ENCODE measurements at regions of chr21 and their contacts with region 1.

Region 1: GRCh38 chr21:42009831-42010523 is at the start of gene ZBTB21:
- DNase-seq: peak; percentile 95 to 99 (median 98)

Region 2: GRCh38 chr21:41879190-41879998 is 130.6 kb before region 1 on chr21 and contains the start of gene PRDM15:
- intact Hi-C with region 1: loop called (anchors 2 kb)
- DNase-seq: peak; percentile 77 to 98 (median 84)

Region 3: DNA sequence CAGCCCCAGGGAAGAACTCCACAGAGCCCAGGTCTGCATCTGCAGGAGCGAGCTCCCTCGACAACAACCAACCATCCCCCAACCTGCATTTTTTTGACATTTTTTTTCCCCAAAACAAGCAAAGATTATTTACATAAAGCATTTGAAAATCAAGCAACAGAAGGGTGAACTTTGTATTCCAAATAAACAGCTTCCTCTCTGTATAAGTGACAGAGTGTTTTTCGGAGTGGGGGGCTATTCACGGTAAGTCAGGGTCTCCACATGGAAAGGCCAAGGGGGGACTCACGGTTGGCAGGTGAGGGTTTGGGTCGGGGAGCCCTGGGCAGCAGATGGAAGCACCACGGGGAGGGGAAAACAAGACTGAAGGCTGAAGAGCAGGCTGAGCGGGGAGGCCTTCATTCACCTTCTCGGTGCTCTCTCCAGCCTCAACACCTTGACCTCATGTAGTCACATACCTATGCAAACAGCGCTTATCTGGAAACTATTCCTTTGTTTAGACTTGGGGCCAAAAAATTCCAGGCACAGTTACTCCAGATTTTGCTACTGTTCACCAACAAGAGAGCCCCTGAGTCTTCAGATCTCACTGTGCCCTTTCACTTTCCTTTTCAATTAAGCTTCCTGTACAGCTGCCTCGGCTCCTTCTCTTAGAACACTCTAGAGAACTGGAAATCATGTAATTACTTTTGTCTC is 83.7 kb before region 1 on chr21:
- intact Hi-C with region 1: no loop called
- DNase-seq: no peak

Region 4: GRCh38 chr21:41957991-41958766 is 51.8 kb before region 1 on chr21:
- intact Hi-C with region 1: loop called (anchors 5 kb)
- DNase-seq: peak in 7 of 10 donors; percentile 29 to 91 (median 55)

Region 5: GRCh38 chr21:42117229-42117966 is 107.4 kb after region 1 on chr21:
- intact Hi-C with region 1: loop called (anchors 5 kb)
- DNase-seq: peak; percentile 68 to 96 (median 88)